ENCODE measurements at regions of chr4 and their contacts with region 1.

Region 1: GRCh38 chr4:20109391-20109790 is 142.3 kb upstream of the SLIT2 start:
- DNase-seq: no peak
- H3K4me3 ChIP-seq: no peak overlapping the region
- H3K4me3 Mint-ChIP-seq: no peak overlapping the region
- H3K27ac ChIP-seq: no peak overlapping the region
- H3K27ac Mint-ChIP-seq: no peak overlapping the region
- H3K4me1 ChIP-seq: no peaks in the 10 kb centered on the region
- H3K4me1 Mint-ChIP-seq: no peaks in the 10 kb centered on the region
- H3K27me3 ChIP-seq: no peaks in the 10 kb centered on the region
- H3K27me3 Mint-ChIP-seq: no peaks in the 10 kb centered on the region

Region 2: GRCh38 chr4:19580095-19580494 is 529.3 kb before region 1 on chr4:
- CTCF ChIA-PET with region 1: no interaction called
- POLR2A ChIA-PET with region 1: no interaction called
- intact Hi-C with region 1: no loop called
- DNase-seq: no peak
- H3K4me3 ChIP-seq: no peak overlapping the region
- H3K4me3 Mint-ChIP-seq: no peak overlapping the region
- H3K27ac ChIP-seq: no peak overlapping the region
- H3K27ac Mint-ChIP-seq: no peak overlapping the region
- H3K4me1 ChIP-seq: no peaks in the 10 kb centered on the region
- H3K4me1 Mint-ChIP-seq: no peaks in the 10 kb centered on the region
- H3K27me3 ChIP-seq: no peaks in the 10 kb centered on the region
- H3K27me3 Mint-ChIP-seq: no peaks in the 10 kb centered on the region

Region 3: GRCh38 chr4:20172070-20172760 is 62.8 kb after region 1 on chr4:
- CTCF ChIA-PET with region 1: no interaction called
- POLR2A ChIA-PET with region 1: no interaction called
- intact Hi-C with region 1: loop called (anchors 5 kb)
- DNase-seq: no peak
- H3K4me3 ChIP-seq: no peak overlapping the region
- H3K4me3 Mint-ChIP-seq: no peak overlapping the region
- H3K27ac ChIP-seq: no peak overlapping the region
- H3K27ac Mint-ChIP-seq: no peak overlapping the region
- H3K4me1 ChIP-seq: no peaks in the 10 kb centered on the region
- H3K4me1 Mint-ChIP-seq: no peaks in the 10 kb centered on the region
- H3K27me3 ChIP-seq: no peaks in the 10 kb centered on the region
- H3K27me3 Mint-ChIP-seq: no peaks in the 10 kb centered on the region